HEK293 (cell line): ENCODE measurements at regions of chr13 and their contacts with region 1.

Region 1: DNA sequence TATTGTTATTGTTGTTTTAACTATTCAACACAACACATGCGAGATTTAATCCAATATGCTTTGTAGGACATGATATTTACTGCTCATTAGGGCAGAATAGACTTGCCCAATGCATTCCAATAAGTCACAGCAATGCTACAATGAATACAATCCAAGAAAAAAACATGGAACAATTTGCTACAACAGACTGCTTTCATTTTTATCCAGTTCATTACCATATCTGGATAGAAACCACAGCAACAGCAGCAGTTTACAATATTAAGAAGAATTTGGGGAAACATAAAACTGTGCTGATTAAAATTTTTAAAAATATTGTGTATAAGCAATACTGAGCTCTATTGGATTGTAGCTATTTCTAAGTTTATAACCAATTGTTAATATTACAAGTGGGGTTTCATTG is 833.0 kb downstream of the DIAPH3 start:
- H3K4me3 ChIP-seq: no peak overlapping the region
- H3K27ac ChIP-seq: no peak overlapping the region
- H3K4me1 ChIP-seq: no peaks in the 10 kb centered on the region
- CTCF ChIP-seq: no peak

Region 2: DNA sequence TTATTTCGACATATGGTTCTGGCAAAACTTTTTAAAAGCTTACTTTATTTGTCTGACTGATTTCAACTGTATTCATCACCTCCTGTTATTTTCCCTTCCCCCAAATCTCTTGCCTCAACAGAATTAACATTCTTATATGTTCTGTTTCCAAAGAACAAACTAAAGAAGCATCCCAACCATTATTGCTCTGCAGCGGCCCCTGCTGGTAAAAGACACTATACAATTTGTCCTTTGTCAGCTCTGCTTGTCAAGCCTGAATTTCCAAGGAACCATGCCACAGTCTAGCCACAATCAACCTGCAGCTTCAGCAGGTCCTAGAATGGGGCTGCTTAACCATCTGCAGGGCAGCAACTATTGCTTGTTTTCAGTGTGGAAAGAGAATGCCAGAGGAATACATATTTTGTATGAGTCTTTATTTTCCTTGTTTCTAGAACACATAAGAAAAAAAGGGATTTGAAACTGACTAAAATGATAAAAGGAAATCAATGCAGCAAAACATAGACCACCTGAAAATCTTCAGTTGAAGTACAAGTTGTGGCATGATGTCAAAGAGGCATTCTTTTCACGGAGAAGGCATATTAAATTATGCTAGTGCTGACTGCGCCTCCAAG is 12.3 kb before region 1 on chr13:
- CTCF ChIA-PET with region 1: interaction called, 14 read pairs
- POLR2A ChIA-PET with region 1: no interaction called
- H3K4me3 ChIP-seq: no peak overlapping the region
- H3K27ac ChIP-seq: no peak overlapping the region
- H3K4me1 ChIP-seq: no peaks in the 10 kb centered on the region
- CTCF ChIP-seq: no peak

Region 3: DNA sequence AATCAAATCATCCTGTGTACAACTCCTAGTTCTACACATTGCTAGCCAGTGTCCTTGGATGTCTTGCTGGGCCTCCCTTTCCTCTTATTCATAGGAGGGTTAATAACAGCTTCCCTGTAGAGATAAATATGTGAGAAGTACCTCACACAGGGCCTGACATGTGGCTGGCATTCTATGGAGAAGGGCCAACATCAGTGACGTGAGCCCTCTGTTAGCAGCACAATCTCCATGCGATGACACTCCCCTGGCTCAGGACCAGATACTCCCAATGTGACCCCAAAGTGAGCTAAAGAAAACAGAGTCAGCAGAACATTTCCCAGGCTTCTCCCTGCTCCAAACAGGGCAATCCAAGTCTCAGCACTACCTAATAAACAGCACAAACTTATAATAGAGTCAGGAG is 14.6 kb after region 1 on chr13:
- CTCF ChIA-PET with region 1: no interaction called
- POLR2A ChIA-PET with region 1: no interaction called
- H3K4me3 ChIP-seq: no peak overlapping the region
- H3K27ac ChIP-seq: no peak overlapping the region
- H3K4me1 ChIP-seq: no peaks in the 10 kb centered on the region
- CTCF ChIP-seq: no peak

Region 4: DNA sequence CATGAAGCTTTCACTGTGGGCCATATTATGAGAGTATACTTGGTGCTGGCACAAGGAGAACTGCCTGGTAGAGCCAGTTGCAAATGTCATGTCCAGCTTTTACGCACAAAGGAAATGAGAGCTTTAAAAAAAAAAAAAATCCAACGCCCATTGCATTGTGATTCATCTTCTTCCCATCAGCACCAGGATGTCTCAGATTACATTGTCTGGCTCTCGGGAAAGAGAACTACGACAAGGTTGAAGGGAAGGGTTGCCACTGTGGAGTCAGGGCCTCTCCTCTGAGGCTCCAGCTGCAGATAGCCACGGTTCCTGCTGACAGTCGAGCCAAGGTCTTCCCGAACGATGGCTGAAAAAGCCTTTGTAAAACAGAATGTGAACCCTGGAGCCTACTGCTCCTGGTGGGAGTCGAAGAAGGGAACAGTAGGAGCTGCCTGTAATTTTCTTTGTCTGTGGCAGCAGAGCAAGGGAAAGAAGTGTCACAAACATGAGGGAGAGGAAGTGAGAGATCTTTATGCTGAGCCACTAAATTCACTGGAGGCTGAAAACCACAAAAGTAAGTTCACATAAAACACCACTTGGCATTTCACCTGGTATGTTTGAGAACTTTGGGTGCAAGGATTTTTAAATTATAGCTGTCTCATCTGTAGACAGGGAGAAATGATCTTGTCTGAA is 128.3 kb after region 1 on chr13:
- CTCF ChIA-PET with region 1: no interaction called
- POLR2A ChIA-PET with region 1: no interaction called
- H3K4me3 ChIP-seq: no peak overlapping the region
- H3K27ac ChIP-seq: no peak overlapping the region
- H3K4me1 ChIP-seq: no peaks in the 10 kb centered on the region; the same call in 1 of the 2 replicates
- CTCF ChIP-seq: no peak